ENCODE measurements at regions of chr15 and their contacts with region 1.

Region 1: GRCh38 chr15:45402162-45402954 is 24.0 kb upstream of the GATM start:
- DNase-seq: peak; percentile 85 to 98
- ATAC-seq: peak; percentile 91 to 96
- H3K4me3 ChIP-seq: peak overlapping the region; percentile 93
- H3K27ac ChIP-seq: peak overlapping the region; percentile 93 to 98
- H3K4me1 ChIP-seq: peaks cover 12% of the 10 kb centered on the region; the same call in 2 of the 3 replicates
- CTCF ChIP-seq: no peak
- EP300 ChIP-seq: no peak
- POLR2A ChIP-seq: peak; percentile 71
- RAD21 ChIP-seq: no peak

Region 2: DNA sequence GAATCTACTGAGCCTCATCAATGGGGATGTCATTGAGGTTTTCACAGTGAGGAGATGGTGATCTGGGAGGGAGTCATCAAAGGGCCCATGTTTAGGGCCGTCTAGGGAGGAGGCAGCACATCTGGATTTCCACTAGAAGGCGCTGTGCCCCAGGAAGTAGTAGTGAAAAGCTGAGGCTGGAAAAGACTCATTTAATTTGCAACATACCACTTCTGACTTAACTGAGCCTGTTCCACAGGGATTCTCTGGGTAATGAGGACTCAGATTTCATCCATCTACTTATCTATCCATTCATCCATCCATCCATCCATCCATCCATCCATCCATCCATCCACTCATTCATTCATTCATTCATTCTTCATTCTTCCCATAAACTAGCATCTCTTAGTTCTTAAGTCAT is 197.2 kb before region 1 on chr15:
- CTCF ChIA-PET with region 1: interaction called, 43 read pairs
- POLR2A ChIA-PET with region 1: interaction called, 8 read pairs
- DNase-seq: peak; percentile 55 to 72
- ATAC-seq: peak; percentile 33 to 58; a peak in 3 of 6 replicates
- H3K4me3 ChIP-seq: no peak overlapping the region
- H3K27ac ChIP-seq: no peak overlapping the region
- H3K4me1 ChIP-seq: no peaks in the 10 kb centered on the region
- CTCF ChIP-seq: peak; percentile 67
- EP300 ChIP-seq: no peak
- POLR2A ChIP-seq: no peak
- RAD21 ChIP-seq: peak; percentile 74 to 84

Region 3: DNA sequence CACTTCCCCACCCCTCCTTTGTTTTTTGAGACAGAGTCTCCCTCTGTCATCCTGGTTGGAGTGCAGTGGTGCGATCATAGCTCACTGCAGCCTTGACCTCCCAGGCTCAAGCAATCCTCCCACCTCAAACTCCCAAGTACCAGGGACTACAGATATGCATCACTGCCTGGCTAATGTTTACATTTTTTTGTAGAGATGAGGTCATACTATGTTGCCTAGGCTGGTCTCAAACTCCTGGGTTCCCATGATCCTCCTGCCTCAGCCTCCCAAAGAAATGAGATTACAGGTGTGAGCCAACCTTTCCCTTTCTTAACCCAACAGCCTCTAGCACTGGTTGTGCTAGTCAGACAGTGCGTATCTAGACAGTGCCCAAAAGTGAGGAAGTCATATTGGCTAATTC is 17.7 kb before region 1 on chr15:
- CTCF ChIA-PET with region 1: interaction called, 10 read pairs
- POLR2A ChIA-PET with region 1: interaction called, 3 read pairs
- DNase-seq: no peak
- ATAC-seq: no peak
- H3K4me3 ChIP-seq: no peak overlapping the region
- H3K27ac ChIP-seq: no peak overlapping the region
- H3K4me1 ChIP-seq: peaks cover 7% of the 10 kb centered on the region; the same call in 2 of the 3 replicates
- CTCF ChIP-seq: no peak
- EP300 ChIP-seq: no peak
- POLR2A ChIP-seq: no peak
- RAD21 ChIP-seq: no peak

Region 4: DNA sequence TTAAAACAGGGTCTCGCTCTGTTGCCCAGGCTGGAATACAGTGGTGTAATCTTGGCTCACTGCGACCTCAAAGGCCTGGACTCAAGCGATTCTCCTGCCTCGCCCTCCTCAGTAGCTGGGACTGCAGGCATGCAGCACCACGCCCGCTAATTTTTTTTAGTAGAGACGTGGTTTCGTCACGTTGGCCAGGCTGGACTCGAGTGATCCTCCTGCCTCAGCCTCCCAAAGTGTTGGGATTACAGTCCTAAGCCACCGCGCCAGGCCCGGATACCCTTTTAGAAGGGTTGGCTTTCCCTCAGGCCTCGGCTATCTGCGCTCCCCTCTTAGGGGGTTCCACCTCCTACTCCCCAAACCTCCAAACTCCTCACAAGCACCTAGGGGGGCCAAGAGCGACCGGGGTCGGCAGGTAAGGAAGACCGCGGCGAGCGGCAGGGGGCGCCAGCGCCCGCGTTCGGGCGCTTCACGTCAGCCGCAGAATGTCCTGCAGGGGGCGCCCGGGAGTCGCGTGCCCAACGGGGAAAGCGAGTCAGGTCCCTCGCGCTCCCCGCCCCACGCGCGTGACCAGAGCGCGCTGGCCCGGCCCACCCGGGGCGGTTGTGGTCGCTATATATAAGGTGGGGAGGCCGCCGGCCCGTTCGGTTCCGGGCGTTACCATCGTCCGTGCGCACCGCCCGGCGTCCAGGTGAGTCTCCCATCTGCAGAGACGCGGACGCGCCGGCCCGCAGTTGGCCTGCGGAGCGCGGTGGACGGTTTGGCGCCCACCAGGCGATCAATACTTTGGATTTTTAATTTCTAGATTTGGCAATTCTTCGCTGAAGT is 27.8 kb after region 1 on chr15:
- CTCF ChIA-PET with region 1: interaction called, 10 read pairs
- POLR2A ChIA-PET with region 1: no interaction called
- DNase-seq: peak; percentile 34 to 49
- ATAC-seq: peak; percentile 93 to 96
- H3K4me3 ChIP-seq: peak overlapping the region; percentile 58
- H3K27ac ChIP-seq: peak overlapping the region; percentile 57 to 83; a peak in 5 of 6 replicates
- H3K4me1 ChIP-seq: 0 out of 3 replicates have a peak, but pooled peaks cover 4% of the 10 kb centered on the region
- CTCF ChIP-seq: peak; percentile 99
- EP300 ChIP-seq: no peak
- POLR2A ChIP-seq: no peak
- RAD21 ChIP-seq: peak; percentile 77 to 97

Region 5: GRCh38 chr15:45510758-45511280 is 108.5 kb after region 1 on chr15:
- CTCF ChIA-PET with region 1: no interaction called
- POLR2A ChIA-PET with region 1: no interaction called
- DNase-seq: no peak
- ATAC-seq: no peak
- H3K4me3 ChIP-seq: no peak overlapping the region
- H3K27ac ChIP-seq: no peak overlapping the region
- H3K4me1 ChIP-seq: no peaks in the 10 kb centered on the region
- CTCF ChIP-seq: no peak
- EP300 ChIP-seq: no peak
- POLR2A ChIP-seq: no peak
- RAD21 ChIP-seq: no peak

Region 6: GRCh38 chr15:45635191-45635638 is 232.9 kb after region 1 on chr15:
- CTCF ChIA-PET with region 1: no interaction called
- POLR2A ChIA-PET with region 1: no interaction called
- DNase-seq: peak; percentile 36 to 59
- ATAC-seq: peak; percentile 76
- H3K4me3 ChIP-seq: peak overlapping the region; percentile 73
- H3K27ac ChIP-seq: peak overlapping the region; percentile 89 to 92
- H3K4me1 ChIP-seq: peaks cover 54% of the 10 kb centered on the region
- CTCF ChIP-seq: peak; percentile 41; the same call in 2 of the 3 replicates
- EP300 ChIP-seq: no peak
- POLR2A ChIP-seq: no peak
- RAD21 ChIP-seq: no peak; a peak in 1 of 5 replicates

Measured in A549 (cell line).